CD14-positive monocyte (primary cell): ENCODE measurements at regions of chr17 and their contacts with region 1.

Region 1: GRCh38 chr17:39687811-39688518 is at the start of gene PGAP3:
- DNase-seq: peak; percentile 70 to 88 (median 86)
- H3K4me3 ChIP-seq: peak within 1 kb of the TSS; percentile 60 to 96 (median 82)
- H3K4me3 Mint-ChIP-seq: peak within 1 kb of the TSS; percentile 94 to 97
- H3K27ac ChIP-seq: peak within 1 kb of the TSS; percentile 78 to 79
- H3K27ac Mint-ChIP-seq: peak within 1 kb of the TSS; percentile 88 to 96 (median 94)
- H3K4me1 ChIP-seq: peaks cover 12 to 18% of the 10 kb centered on the region in 2 donors
- H3K4me1 Mint-ChIP-seq: peaks cover 17% of the 10 kb centered on the region
- H3K27me3 ChIP-seq: no peaks in the 10 kb centered on the region
- H3K27me3 Mint-ChIP-seq: peaks cover 2 to 9% (median 8%) of the 10 kb centered on the region in 3 donors
- CTCF ChIP-seq: no peak
- polyA plus RNA-seq, gene PGAP3: 8.3 to 19.3 (median 9.2) TPM

Region 2: GRCh38 chr17:39636927-39637736 is 50.8 kb before region 1 on chr17 and contains the start of gene STARD3:
- intact Hi-C with region 1: loop called in 1 of 2 experiments (anchors 5 kb)
- DNase-seq: peak; percentile 84 to 88 (median 85)
- H3K4me3 ChIP-seq: peak within 1 kb of the TSS; percentile 85 to 90 (median 87)
- H3K4me3 Mint-ChIP-seq: peak within 1 kb of the TSS; percentile 87 to 93
- H3K27ac ChIP-seq: peak within 1 kb of the TSS; percentile 71 to 90
- H3K27ac Mint-ChIP-seq: peak within 1 kb of the TSS; percentile 86 to 96 (median 93)
- H3K4me1 ChIP-seq: peaks cover 59 to 71% of the 10 kb centered on the region in 2 donors
- H3K4me1 Mint-ChIP-seq: peaks cover 64% of the 10 kb centered on the region
- H3K27me3 ChIP-seq: peaks cover 0 to 4% of the 10 kb centered on the region in 2 donors
- H3K27me3 Mint-ChIP-seq: peaks cover 4 to 8% (median 8%) of the 10 kb centered on the region in 3 donors
- CTCF ChIP-seq: no peak
- polyA plus RNA-seq, gene STARD3: 35.1 to 114 (median 45.3) TPM

Region 3: DNA sequence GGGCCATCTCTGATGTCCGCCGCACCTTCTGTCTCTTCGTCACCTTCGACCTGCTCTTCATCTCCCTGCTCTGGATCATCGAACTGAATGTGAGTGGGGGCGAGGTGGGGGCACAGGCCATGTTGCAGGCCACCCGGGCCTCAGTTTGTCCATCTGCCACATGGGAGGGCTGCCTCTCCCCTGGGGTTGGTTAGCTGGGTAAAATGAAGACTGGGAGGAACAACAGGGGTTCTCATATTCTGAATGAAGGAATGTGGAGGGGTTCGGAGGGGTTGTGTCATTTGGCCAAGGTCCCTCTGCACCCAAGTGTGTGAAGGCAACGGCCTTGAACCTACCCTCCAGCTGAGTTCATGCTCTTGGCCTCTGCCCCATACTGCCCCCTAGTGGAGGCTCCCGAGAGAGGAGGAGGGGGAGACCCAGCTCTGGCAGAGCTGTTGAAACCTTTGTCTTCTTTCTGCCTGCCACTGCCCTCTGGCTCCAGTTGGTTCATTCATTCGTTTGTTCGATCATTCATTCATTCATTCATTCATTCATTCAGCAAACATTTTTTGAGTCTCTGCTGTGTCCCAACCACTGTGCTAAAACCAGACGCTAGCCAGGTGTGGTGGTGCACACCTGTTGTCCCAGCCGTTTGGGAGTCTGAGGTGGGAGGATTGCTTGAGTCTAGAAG is 34.2 kb before region 1 on chr17:
- intact Hi-C with region 1: no loop called
- DNase-seq: peak; percentile 53 to 62 (median 58)
- H3K4me3 ChIP-seq: no peak overlapping the region
- H3K4me3 Mint-ChIP-seq: no peak overlapping the region
- H3K27ac ChIP-seq: no peak overlapping the region
- H3K27ac Mint-ChIP-seq: peak overlapping the region in 2 of 7 donors; percentile 68 to 89
- H3K4me1 ChIP-seq: peaks cover 3 to 7% of the 10 kb centered on the region in 2 donors
- H3K4me1 Mint-ChIP-seq: peaks cover 24% of the 10 kb centered on the region
- H3K27me3 ChIP-seq: no peaks in the 10 kb centered on the region
- H3K27me3 Mint-ChIP-seq: peaks cover 0 to 3% (median 1%) of the 10 kb centered on the region in 3 donors
- CTCF ChIP-seq: peak; percentile 95